ENCODE measurements at regions of chr3 and their contacts with region 1.

Region 1: DNA sequence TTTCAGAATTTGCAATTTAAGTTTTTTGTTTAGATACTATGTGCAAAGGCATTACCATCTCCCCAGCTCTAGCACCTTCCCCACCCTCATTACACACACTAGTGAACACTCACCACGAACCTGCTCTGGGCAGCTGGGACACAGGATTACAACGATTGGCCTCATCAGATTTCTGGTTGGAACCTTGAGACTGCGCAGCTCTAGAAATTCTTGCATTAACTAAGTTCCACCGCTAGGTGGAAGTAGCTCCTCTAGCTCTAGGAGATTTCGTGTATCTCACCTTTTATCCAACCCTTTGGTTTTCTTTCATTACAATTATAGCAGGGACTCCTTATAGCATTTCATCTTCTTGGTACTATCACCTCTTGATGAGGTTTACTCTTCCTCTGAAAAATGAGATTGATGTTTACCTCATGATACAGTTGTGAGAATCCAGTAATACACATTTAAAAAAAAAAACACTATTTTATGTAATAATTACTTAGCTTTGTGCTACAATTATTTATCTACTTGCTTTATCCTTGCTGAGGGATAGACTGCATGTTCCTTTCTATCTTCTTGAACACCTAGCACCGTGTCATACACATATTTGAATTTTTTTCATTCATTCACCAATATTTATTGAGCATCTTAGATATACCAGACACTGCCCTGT is 28.7 kb upstream of the PLOD2 start:
- DNase-seq: no peak
- ATAC-seq: peak; percentile 88
- H3K4me3 ChIP-seq: no peak overlapping the region
- H3K27ac ChIP-seq: no peak overlapping the region
- H3K4me1 ChIP-seq: no peaks in the 10 kb centered on the region
- H3K27me3 ChIP-seq: no peaks in the 10 kb centered on the region

Region 2: DNA sequence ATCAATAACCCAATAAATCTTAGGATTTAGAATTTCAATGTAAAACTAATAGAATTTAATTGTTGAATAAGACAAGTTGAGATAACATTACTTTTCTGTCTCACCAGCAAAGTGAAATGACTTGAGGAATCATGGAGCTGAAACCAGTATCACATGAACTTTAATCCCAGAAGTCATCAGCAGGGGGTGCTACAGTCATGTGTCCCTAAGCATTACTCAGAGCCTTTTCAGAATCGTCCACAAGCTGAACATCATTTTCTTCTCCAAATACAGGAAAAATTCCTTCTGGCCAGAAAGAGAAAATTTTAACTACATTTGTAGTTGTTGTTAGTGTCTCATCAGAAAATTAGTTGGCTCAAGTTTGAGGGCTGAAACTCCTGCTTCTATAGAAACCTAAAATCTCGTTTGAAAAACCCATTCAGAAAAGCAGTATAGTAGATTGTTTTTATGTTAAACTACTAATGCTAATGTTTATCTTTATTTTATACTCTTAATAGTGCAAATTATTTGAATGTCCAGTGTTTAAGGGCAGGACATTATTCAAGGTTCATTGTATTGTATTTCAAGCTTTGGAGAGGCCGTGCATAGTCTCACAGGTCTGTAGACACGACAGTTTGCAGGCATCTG is 412.8 kb before region 1 on chr3:
- intact Hi-C with region 1: loop called (anchors 10 kb)
- DNase-seq: no peak
- ATAC-seq: no peak
- H3K4me3 ChIP-seq: no peak overlapping the region
- H3K27ac ChIP-seq: no peak overlapping the region
- H3K4me1 ChIP-seq: no peaks in the 10 kb centered on the region
- H3K27me3 ChIP-seq: no peaks in the 10 kb centered on the region

Region 3: DNA sequence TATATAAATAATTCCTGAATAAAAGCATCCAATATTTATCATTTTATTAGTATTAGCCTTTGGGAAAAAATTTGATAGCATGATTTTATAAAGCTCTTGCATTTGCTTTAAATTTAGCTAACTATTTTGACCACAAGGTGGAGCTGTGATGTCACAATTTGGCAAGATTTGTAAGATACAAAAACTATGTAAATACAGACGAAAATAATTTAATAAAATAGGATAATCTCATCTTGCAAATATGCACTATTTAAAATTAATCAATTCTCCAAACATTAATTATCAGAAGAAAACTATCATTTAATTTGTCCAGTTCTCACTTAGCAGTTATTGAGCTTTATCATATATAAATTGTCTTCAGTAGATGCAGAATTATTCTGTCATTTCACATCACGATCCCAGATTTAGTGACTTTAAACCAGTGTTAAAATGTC is 124.1 kb before region 1 on chr3:
- intact Hi-C with region 1: loop called (anchors 5 kb)
- DNase-seq: no peak
- ATAC-seq: no peak
- H3K4me3 ChIP-seq: no peak overlapping the region
- H3K27ac ChIP-seq: no peak overlapping the region
- H3K4me1 ChIP-seq: no peaks in the 10 kb centered on the region
- H3K27me3 ChIP-seq: no peaks in the 10 kb centered on the region